B cell (primary cell): ENCODE measurements at regions of chr11 and their contacts with region 1.

Region 1: GRCh38 chr11:36265793-36266628 is 23.2 kb downstream of the COMMD9 start:
- DNase-seq: peak; percentile 67
- ATAC-seq: peak; percentile 51
- H3K4me3 ChIP-seq: no peak overlapping the region
- H3K4me3 Mint-ChIP-seq: no peak overlapping the region
- H3K27ac ChIP-seq: no peak overlapping the region
- H3K27ac Mint-ChIP-seq: no peak overlapping the region
- H3K4me1 ChIP-seq: no peaks in the 10 kb centered on the region
- H3K4me1 Mint-ChIP-seq: no peaks in the 10 kb centered on the region
- H3K27me3 ChIP-seq: peaks cover 0 to 4% (median 0%) of the 10 kb centered on the region in 4 experiments
- H3K27me3 Mint-ChIP-seq: peaks cover 11% of the 10 kb centered on the region
- CTCF ChIP-seq: peak; percentile 80

Region 2: GRCh38 chr11:35267504-35267903 is 998.5 kb before region 1 on chr11:
- CTCF ChIA-PET with region 1: no interaction called
- POLR2A ChIA-PET with region 1: no interaction called
- intact Hi-C with region 1: no loop called
- DNase-seq: no peak
- ATAC-seq: no peak
- H3K4me3 ChIP-seq: no peak overlapping the region
- H3K4me3 Mint-ChIP-seq: no peak overlapping the region
- H3K27ac ChIP-seq: no peak overlapping the region
- H3K27ac Mint-ChIP-seq: no peak overlapping the region
- H3K4me1 ChIP-seq: peaks cover 10 to 12% of the 10 kb centered on the region in 2 donors
- H3K4me1 Mint-ChIP-seq: peaks cover 28% of the 10 kb centered on the region
- H3K27me3 ChIP-seq: no peaks in the 10 kb centered on the region
- H3K27me3 Mint-ChIP-seq: no peaks in the 10 kb centered on the region
- CTCF ChIP-seq: no peak

Region 3: GRCh38 chr11:35485656-35486322 is 780.2 kb before region 1 on chr11:
- CTCF ChIA-PET with region 1: interaction called, 3 read pairs
- POLR2A ChIA-PET with region 1: no interaction called
- intact Hi-C with region 1: loop called (anchors 5 kb)
- DNase-seq: peak; percentile 71
- ATAC-seq: peak; percentile 70
- H3K4me3 ChIP-seq: no peak overlapping the region
- H3K4me3 Mint-ChIP-seq: no peak overlapping the region
- H3K27ac ChIP-seq: no peak overlapping the region
- H3K27ac Mint-ChIP-seq: no peak overlapping the region
- H3K4me1 ChIP-seq: no peaks in the 10 kb centered on the region
- H3K4me1 Mint-ChIP-seq: no peaks in the 10 kb centered on the region
- H3K27me3 ChIP-seq: peaks cover 0 to 22% (median 9%) of the 10 kb centered on the region in 4 experiments
- H3K27me3 Mint-ChIP-seq: peaks cover 57% of the 10 kb centered on the region
- CTCF ChIP-seq: peak; percentile 97

Region 4: DNA sequence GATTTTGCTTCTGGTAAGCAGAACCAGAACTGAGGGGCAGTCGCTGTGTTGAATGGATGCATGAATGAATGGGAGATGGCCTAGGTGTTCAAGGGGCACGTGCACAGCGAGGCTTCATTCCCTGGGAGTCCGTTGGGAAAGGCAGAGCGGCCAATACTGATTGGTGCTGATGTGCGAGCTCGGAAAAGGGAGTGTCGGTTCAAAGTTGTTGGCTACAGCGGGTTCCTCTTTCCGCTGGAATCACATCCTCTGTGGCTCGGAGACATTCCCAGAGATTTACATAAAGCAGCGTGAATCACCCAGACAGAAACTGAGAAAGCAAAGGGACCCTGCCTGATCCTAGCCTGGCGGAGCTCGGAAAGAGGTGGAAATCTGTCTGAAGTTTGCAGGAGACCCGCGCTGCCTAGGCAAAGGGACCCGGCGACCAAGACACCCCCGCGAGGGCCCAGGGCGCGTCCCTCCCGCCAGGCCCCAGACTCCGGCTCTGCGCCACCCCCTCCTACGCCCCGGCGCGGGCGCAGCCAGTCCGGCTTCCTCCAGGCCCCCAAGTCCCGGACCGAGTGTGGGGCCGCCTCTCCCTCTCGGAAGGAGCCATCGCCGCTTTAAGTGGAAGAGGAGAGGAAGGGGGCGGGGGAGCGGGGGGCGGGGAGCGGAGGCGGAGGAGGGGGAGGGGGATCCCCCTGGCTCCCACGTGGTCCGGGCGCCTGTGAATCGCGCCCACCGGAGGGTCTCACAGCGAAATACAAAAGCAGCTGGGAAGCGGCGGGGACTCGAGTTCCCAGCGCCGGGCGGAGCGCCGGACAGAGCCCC is 648.1 kb before region 1 on chr11 and contains the start of gene FJX1:
- CTCF ChIA-PET with region 1: interaction called, 109 read pairs
- POLR2A ChIA-PET with region 1: no interaction called
- intact Hi-C with region 1: no loop called
- DNase-seq: peak; percentile 29
- ATAC-seq: peak; percentile 38
- H3K4me3 ChIP-seq: peak within 1 kb of the TSS; percentile 7 to 55 (median 42)
- H3K4me3 Mint-ChIP-seq: peak within 1 kb of the TSS; percentile 83
- H3K27ac ChIP-seq: no peak within 1 kb of the TSS
- H3K27ac Mint-ChIP-seq: no peak within 1 kb of the TSS
- H3K4me1 ChIP-seq: peaks cover 17 to 21% of the 10 kb centered on the region in 2 donors
- H3K4me1 Mint-ChIP-seq: peaks cover 16% of the 10 kb centered on the region
- H3K27me3 ChIP-seq: peaks cover 0 to 52% (median 32%) of the 10 kb centered on the region in 4 experiments
- H3K27me3 Mint-ChIP-seq: peaks cover 44% of the 10 kb centered on the region
- CTCF ChIP-seq: no peak
- total RNA-seq, gene FJX1: 0.36 TPM in 1 of 2 replicates, not detected in the other

Region 5: DNA sequence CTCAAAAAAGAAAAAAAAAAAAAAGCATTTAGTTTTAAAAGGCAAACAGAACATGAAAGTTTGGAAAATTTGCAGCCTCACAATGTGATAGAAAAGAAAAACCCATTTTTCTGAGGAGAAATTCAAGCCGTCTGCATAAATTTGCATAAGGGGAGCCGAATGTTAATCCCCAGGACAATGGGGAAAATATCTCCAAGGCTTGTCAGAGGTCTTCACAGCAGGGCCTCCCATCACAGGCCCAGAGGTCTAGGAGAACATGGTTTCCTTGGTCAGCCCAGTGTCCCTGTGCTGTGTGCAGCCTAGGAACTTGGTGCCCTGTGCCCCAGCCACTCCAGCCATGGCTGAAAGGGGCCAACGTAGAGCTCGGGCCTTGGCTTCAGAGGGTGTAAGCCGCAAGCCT is 494.3 kb before region 1 on chr11:
- CTCF ChIA-PET with region 1: no interaction called
- POLR2A ChIA-PET with region 1: no interaction called
- intact Hi-C with region 1: no loop called
- DNase-seq: no peak
- ATAC-seq: no peak
- H3K4me3 ChIP-seq: no peak overlapping the region
- H3K4me3 Mint-ChIP-seq: no peak overlapping the region
- H3K27ac ChIP-seq: no peak overlapping the region
- H3K27ac Mint-ChIP-seq: no peak overlapping the region
- H3K4me1 ChIP-seq: no peaks in the 10 kb centered on the region
- H3K4me1 Mint-ChIP-seq: peaks cover 18% of the 10 kb centered on the region
- H3K27me3 ChIP-seq: no peaks in the 10 kb centered on the region
- H3K27me3 Mint-ChIP-seq: no peaks in the 10 kb centered on the region
- CTCF ChIP-seq: no peak

Region 6: DNA sequence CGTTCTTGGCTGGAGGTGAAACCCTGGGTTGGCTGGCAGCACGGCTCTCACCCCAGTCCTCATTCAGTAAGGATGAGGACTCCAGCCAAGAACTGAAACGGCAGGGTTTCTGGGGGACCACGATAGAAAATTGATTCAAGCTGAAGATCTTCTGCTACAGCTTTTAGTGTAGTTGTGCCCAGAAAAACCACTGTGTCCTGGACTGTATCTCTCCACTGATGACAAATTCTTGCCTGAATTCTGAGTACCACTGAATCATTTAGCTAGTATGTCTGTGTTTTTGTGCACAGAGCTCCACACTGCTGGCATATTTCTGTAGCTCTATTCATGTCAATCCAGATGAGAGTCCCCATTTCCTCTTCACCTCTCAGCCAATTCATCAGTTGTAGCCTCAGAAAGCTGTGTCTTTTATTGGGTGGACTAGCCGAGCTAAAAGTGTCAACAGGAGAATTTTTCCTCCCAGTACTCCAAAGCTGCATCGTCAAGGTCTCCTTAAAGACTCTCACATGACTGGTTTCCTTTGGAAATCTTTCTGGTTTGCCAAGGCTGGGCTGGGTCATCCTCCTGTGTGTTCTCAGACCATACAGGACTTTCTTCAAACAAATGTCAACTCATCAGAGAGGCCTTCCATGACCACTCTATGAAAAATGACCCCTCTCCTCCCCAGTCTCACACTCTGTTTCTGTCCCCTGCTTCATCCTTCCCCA is 177.6 kb before region 1 on chr11:
- CTCF ChIA-PET with region 1: no interaction called
- POLR2A ChIA-PET with region 1: no interaction called
- intact Hi-C with region 1: no loop called
- DNase-seq: no peak
- ATAC-seq: no peak
- H3K4me3 ChIP-seq: no peak overlapping the region
- H3K4me3 Mint-ChIP-seq: no peak overlapping the region
- H3K27ac ChIP-seq: no peak overlapping the region
- H3K27ac Mint-ChIP-seq: no peak overlapping the region
- H3K4me1 ChIP-seq: no peaks in the 10 kb centered on the region
- H3K4me1 Mint-ChIP-seq: no peaks in the 10 kb centered on the region
- H3K27me3 ChIP-seq: peaks cover 0 to 10% (median 3%) of the 10 kb centered on the region in 4 experiments
- H3K27me3 Mint-ChIP-seq: peaks cover 33% of the 10 kb centered on the region
- CTCF ChIP-seq: no peak

Region 7: GRCh38 chr11:36253238-36253637 is 12.8 kb before region 1 on chr11:
- CTCF ChIA-PET with region 1: interaction called, 14 read pairs
- POLR2A ChIA-PET with region 1: no interaction called
- intact Hi-C with region 1: no loop called
- DNase-seq: no peak
- ATAC-seq: no peak
- H3K4me3 ChIP-seq: no peak overlapping the region
- H3K4me3 Mint-ChIP-seq: no peak overlapping the region
- H3K27ac ChIP-seq: no peak overlapping the region
- H3K27ac Mint-ChIP-seq: no peak overlapping the region
- H3K4me1 ChIP-seq: no peaks in the 10 kb centered on the region
- H3K4me1 Mint-ChIP-seq: no peaks in the 10 kb centered on the region
- H3K27me3 ChIP-seq: peaks cover 0 to 14% (median 6%) of the 10 kb centered on the region in 4 experiments
- H3K27me3 Mint-ChIP-seq: peaks cover 44% of the 10 kb centered on the region
- CTCF ChIP-seq: no peak